T-cell (primary cell): ENCODE measurements at regions of chr9 and their contacts with region 1.

Region 1: DNA sequence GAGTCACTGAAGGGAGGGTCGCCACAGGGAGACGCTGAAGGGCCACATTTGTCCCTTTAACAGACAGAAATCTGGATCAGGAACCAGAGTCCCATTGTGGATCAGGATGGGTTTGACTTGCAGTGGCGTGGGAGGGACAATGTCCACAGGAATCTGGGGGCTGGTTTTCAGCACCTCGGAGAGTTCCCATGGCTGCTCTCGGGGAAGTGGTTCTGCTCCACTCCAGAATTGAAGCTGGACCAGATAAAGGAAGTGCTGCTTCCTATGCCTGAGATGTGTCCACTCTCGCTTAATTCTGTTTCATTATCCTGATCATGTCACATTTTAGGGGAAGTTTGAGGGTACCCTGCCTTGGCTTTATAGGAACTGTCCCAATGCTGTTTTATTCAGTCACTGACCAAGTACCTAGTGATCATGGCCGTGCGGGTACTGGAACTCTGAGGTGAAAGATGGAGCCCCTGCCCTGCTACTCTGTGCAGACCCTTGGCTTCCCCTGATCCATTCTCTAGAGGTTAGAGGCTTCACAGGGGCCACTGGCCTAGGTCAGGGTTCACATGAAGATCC is 28.7 kb downstream of the ENHO start:
- DNase-seq: peak in 17 of 35 experiments; percentile 6 to 39 (median 18)
- ATAC-seq: no peak
- H3K4me3 ChIP-seq: no peak overlapping the region
- H3K4me3 Mint-ChIP-seq: no peak overlapping the region
- H3K27ac ChIP-seq: no peak overlapping the region
- H3K27ac Mint-ChIP-seq: no peak overlapping the region
- H3K4me1 ChIP-seq: no peaks in the 10 kb centered on the region
- H3K4me1 Mint-ChIP-seq: no peaks in the 10 kb centered on the region
- H3K27me3 ChIP-seq: peaks cover 4 to 27% of the 10 kb centered on the region in 2 experiments
- H3K27me3 Mint-ChIP-seq: peaks cover 17 to 34% of the 10 kb centered on the region in 2 donors

Region 2: DNA sequence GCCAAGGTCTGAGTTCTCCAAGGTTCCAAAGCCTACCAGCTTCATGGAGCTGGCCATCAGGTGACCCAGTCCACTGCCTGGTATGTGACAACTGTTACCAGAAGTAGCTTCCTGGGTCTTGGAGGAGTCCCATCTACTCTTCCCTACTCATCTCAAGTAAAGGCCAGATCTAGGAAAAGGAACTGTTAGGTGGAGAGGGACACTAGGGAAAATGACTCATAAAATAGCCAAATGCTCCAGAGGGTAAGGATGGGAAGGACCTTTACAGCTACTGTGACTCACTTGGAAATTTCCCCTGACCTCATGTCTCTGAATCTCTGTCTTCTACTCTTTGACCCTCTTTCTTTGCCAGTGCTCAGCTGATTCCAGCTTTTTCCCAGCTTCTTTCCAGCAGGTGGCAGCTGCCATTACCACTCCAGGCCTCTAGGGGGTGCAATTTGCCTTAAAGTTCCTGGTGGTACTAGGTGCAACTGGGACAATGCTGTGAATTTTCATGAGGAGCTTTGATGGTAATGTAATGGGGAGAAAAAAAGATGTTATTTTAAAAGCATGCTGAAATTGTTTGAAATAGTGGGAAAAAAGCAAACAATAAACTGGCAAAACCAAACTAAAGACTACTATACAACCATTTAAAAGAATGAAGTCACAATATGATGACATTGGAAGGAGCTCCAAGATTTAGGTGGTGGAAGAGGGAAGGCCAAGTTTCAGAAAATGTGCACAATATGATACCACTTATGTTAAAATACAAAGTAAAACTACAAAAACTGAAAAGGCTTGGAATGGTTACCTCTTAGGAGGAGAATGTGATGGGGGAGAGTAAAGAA is 90.3 kb before region 1 on chr9:
- CTCF ChIA-PET with region 1: interaction called, 3 to 11 read pairs
- POLR2A ChIA-PET with region 1: no interaction called
- DNase-seq: peak in 28 of 35 experiments; percentile 13 to 69 (median 34)
- ATAC-seq: peak in 2 of 4 experiments; percentile 47 to 60
- H3K4me3 ChIP-seq: no peak overlapping the region
- H3K4me3 Mint-ChIP-seq: no peak overlapping the region
- H3K27ac ChIP-seq: no peak overlapping the region
- H3K27ac Mint-ChIP-seq: no peak overlapping the region
- H3K4me1 ChIP-seq: no peaks in the 10 kb centered on the region
- H3K4me1 Mint-ChIP-seq: no peaks in the 10 kb centered on the region
- H3K27me3 ChIP-seq: no peaks in the 10 kb centered on the region
- H3K27me3 Mint-ChIP-seq: no peaks in the 10 kb centered on the region

Region 3: GRCh38 chr9:34513567-34514214 is 19.6 kb after region 1 on chr9:
- CTCF ChIA-PET with region 1: no interaction called
- POLR2A ChIA-PET with region 1: no interaction called
- DNase-seq: no peak
- ATAC-seq: no peak
- H3K4me3 ChIP-seq: no peak overlapping the region
- H3K4me3 Mint-ChIP-seq: no peak overlapping the region
- H3K27ac ChIP-seq: no peak overlapping the region
- H3K27ac Mint-ChIP-seq: no peak overlapping the region
- H3K4me1 ChIP-seq: no peaks in the 10 kb centered on the region
- H3K4me1 Mint-ChIP-seq: no peaks in the 10 kb centered on the region
- H3K27me3 ChIP-seq: peaks cover 0 to 6% of the 10 kb centered on the region in 2 experiments
- H3K27me3 Mint-ChIP-seq: no peaks in the 10 kb centered on the region

Region 4: DNA sequence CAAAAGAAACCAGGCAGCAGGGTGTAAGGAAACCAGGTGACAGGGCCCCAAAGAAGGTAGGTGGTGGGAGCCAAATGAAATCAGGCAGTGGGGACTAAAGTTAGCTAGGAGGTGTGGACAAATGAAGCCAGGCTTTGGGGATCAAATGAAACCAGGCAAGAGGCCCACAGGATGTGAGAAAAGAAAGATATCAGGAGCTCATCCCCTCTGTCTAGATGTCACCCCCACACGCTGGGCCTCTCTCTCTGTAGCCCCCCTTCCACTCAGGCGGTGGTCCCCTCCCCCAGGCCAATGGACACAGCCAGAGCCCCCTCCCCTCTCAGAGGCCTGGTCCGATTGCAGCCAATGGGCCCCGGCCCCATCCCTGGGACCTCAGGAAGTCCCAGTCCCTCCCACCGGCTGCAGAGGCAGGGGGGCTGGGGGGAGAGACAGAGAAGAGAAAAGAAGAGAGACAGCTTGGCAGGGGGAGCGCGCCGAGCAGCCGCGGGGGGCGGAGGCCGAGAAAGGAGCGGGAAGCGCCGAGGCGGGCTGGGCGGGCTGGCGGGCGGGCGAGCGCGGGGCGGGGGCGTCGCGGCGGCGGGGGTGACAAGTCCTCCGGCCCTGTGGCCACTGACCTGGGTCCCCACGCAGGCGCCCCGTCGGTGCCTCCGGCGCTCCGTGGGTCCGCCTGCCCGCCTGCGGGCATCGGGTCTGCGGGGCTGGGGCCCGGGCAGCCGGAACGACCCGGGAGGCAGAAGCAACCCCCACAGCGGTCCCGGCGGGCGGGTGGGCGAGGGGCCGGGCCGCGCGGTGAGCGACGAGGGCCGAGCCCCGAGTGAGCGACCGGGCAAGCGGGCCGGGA is 83.6 kb after region 1 on chr9:
- CTCF ChIA-PET with region 1: no interaction called
- POLR2A ChIA-PET with region 1: interaction called in 1 of 2 experiments, 11 read pairs
- DNase-seq: no peak
- ATAC-seq: no peak
- H3K4me3 ChIP-seq: peak overlapping the region in 1 of 2 donors; percentile 27
- H3K4me3 Mint-ChIP-seq: peak overlapping the region; percentile 29 to 75 (median 46)
- H3K27ac ChIP-seq: no peak overlapping the region
- H3K27ac Mint-ChIP-seq: no peak overlapping the region
- H3K4me1 ChIP-seq: peaks cover 0 to 13% of the 10 kb centered on the region in 2 experiments
- H3K4me1 Mint-ChIP-seq: peaks cover 13 to 16% (median 15%) of the 10 kb centered on the region in 3 donors
- H3K27me3 ChIP-seq: peaks cover 6 to 78% of the 10 kb centered on the region in 2 experiments
- H3K27me3 Mint-ChIP-seq: peaks cover 65 to 72% of the 10 kb centered on the region in 2 donors